Activated naive CD4-positive, alpha-beta T cell treated with anti-CD3 and anti-CD28 coated beads for 36 hours (primary cell): ENCODE measurements at regions of chr17 and their contacts with region 1.

Region 1: GRCh38 chr17:49739641-49740271 is 24.2 kb downstream of the FAM117A start:
- DNase-seq: peak; percentile 92
- H3K4me3 Mint-ChIP-seq: peak overlapping the region; percentile 84
- H3K27ac Mint-ChIP-seq: peak overlapping the region; percentile 99
- H3K4me1 Mint-ChIP-seq: peaks cover 73% of the 10 kb centered on the region
- H3K27me3 Mint-ChIP-seq: no peaks in the 10 kb centered on the region

Region 2: GRCh38 chr17:49223517-49224197 is 516.1 kb before region 1 on chr17:
- CTCF ChIA-PET with region 1: no interaction called
- intact Hi-C with region 1: no loop called
- DNase-seq: peak; percentile 81
- H3K4me3 Mint-ChIP-seq: peak overlapping the region; percentile 63
- H3K27ac Mint-ChIP-seq: peak overlapping the region; percentile 19
- H3K4me1 Mint-ChIP-seq: peaks cover 28% of the 10 kb centered on the region
- H3K27me3 Mint-ChIP-seq: peaks cover 10% of the 10 kb centered on the region

Region 3: GRCh38 chr17:49694847-49695683 is 44.7 kb before region 1 on chr17:
- CTCF ChIA-PET with region 1: no interaction called
- intact Hi-C with region 1: no loop called
- DNase-seq: peak; percentile 87
- H3K4me3 Mint-ChIP-seq: no peak overlapping the region
- H3K27ac Mint-ChIP-seq: peak overlapping the region; percentile 92
- H3K4me1 Mint-ChIP-seq: peaks cover 39% of the 10 kb centered on the region
- H3K27me3 Mint-ChIP-seq: no peaks in the 10 kb centered on the region

Region 4: DNA sequence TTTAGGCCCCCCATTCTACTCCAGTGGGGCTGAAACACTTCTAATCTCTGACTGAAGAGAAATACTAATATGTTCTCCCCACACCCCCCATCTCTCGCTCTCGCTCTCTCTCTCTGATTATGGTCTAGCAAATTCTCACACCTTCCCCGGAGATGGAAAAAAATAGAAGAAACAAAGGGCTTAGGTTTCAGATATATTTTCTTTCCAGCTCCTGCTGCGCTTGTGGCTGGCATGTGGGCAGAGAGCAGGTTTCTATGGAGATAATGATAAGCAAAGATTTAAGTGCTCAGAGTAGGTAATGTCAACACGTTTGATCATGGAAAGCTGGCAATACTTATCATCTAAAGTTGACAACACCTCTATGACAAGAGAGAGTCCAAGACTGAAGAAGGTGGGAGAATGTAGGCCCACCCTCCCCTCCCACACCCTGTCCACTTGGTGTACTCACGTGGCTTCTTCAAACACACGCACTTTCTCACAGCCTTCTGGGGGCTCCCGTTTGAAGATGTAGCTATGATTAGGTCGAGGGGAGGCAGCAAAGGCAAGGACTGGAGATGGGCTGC is 24.0 kb before region 1 on chr17:
- CTCF ChIA-PET with region 1: interaction called, 8 read pairs
- intact Hi-C with region 1: loop called (anchors 1 kb)
- DNase-seq: peak; percentile 46
- H3K4me3 Mint-ChIP-seq: no peak overlapping the region
- H3K27ac Mint-ChIP-seq: peak overlapping the region; percentile 77
- H3K4me1 Mint-ChIP-seq: peaks cover 37% of the 10 kb centered on the region
- H3K27me3 Mint-ChIP-seq: no peaks in the 10 kb centered on the region

Region 5: DNA sequence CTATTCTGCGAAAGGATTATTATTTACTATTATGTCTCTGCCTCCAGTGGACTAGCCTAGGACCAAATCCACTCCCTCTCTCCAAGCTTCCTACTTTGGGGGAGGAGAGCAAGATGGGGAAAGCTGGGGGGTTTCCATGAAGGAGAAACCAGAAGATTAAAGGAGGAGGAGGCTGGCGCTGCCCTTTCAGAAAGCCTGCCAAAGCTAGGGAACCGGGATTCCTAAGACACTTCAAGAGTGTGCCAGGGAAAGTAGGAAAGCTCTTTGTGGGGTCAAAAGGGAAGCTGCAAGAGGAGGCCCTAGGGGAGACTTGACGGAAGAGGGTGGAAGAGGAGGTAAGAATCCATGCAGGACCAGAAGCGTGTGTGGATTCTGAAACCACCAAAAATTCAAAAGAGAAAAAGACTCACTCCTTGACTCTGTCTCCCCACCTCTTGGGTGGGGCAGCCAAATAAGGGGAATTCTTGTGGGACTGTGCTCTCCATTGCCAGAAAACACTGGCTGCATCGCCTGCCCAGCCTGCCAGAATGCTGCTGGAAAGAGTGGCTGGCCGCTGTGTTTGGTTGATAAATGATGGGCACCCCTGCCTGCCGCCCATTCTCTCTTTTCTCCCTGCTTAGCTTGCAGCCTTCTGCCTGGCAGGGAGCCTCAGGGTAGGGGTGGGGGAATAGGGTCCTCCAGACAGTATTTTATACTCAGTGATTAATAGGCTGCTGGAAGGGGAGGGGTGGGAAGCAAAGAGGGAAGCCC is 37.0 kb after region 1 on chr17:
- CTCF ChIA-PET with region 1: no interaction called
- intact Hi-C with region 1: no loop called
- DNase-seq: no peak
- H3K4me3 Mint-ChIP-seq: no peak overlapping the region
- H3K27ac Mint-ChIP-seq: no peak overlapping the region
- H3K4me1 Mint-ChIP-seq: no peaks in the 10 kb centered on the region
- H3K27me3 Mint-ChIP-seq: no peaks in the 10 kb centered on the region

Region 6: DNA sequence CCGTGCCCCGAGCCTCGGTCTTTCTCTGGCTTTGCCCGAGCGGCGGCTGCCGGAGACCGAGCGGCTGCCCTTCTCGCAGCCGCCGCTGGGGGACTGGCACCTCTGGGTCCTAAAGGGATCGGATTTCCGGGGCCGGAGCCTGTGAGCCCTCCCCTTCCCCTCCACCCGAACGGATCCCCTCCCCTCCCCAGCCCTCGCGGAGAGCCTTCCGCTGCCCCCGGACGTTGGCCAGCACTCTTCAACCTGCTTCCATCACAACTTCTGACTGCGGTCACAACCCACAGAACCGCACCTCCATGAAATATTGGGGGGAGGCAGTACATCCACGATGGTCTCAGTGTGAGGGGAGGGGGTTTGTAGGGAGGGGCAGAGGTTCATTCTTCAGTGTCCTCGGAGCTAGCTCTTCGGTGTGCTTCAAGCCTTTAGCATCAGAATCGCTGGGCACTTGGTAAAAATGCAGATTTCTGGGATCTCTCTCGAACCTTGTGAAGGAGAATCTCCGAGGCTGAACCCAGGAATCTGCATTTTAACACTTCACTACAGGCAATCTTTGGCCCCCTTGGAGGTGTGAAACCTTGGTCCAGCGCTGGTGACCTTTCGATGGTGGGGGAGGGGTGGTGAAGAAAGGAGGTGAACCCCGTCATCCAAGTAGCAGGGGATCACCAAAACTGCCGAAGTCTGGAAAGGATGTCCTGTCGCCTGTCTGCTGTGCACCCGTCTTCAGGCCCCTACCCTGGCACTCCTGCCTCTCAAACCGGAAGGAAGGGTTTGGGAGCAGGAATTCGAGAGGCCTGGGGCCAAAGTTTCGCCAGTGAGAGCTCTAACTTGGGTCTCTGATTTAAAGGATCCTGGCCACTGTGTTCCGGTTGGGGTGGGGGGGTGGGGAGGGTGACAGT is 411.5 kb after region 1 on chr17:
- CTCF ChIA-PET with region 1: no interaction called
- intact Hi-C with region 1: loop called (anchors 5 kb)
- DNase-seq: peak; percentile 94
- H3K4me3 Mint-ChIP-seq: peak overlapping the region; percentile 88
- H3K27ac Mint-ChIP-seq: peak overlapping the region; percentile 96
- H3K4me1 Mint-ChIP-seq: peaks cover 44% of the 10 kb centered on the region
- H3K27me3 Mint-ChIP-seq: no peaks in the 10 kb centered on the region